Breast epithelium (tissue), 4 donors: ENCODE measurements at regions of chr4 and their contacts with region 1.

Region 1: DNA sequence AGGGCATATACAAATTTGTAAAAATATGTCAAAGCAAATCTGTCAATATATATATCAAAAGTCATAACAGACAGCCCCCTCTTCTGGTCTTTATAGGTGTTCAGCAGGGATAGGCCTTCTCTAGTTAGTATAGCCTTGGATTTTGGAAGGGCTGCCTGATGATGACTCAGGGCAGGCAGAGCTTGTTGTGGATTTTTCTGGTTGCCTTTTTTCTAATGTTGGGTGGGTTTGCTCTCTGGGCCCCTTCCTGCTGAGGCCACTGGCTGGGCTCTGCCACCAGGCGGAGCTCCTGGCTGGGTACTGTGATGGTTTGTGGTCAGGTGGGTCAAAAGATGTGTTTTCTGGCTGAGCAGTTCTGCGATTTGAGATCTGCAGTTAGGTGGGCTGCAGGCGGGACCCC is 294.2 kb downstream of the GRIA2 start:
- DNase-seq: no peak
- H3K4me3 ChIP-seq: no peak overlapping the region
- H3K27ac ChIP-seq: no peak overlapping the region
- H3K4me1 ChIP-seq: no peaks in the 10 kb centered on the region
- H3K27me3 ChIP-seq: no peaks in the 10 kb centered on the region
- CTCF ChIP-seq: no peak
- POLR2A ChIP-seq: no peak

Region 2: DNA sequence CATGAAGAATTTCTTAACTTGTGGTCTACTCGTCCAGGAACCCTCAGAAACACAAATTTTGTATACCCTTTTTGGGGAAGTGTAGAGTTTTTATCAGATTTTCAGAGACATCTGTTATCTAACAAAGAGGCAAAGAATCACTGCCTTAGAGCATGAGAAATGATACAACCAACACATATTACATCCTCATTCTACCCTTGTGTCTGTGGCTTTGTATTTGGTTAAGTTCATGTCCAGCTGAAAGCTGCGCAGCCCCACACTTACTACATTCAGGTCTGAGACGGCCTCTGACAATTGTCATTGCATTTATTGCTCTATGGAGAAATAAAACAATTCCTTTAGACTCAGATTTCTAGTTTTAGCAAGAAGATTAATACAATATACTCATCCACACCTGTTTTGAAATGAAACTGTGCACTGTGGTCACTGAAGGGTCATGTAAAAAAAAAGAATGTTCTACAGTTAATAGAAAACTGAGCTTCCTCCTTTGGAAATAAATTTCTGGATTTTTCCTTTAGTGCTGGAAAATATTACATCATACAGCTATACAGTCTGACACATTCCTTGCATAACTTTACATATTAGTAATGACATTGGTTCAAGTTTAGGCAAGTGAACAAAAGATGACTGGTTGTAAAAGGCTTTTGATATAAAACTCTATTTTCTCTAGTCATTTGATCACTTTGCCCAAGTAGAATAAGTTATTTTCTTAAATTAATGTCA is 398.9 kb before region 1 on chr4:
- intact Hi-C with region 1: no loop called
- DNase-seq: no peak
- H3K4me3 ChIP-seq: no peak overlapping the region
- H3K27ac ChIP-seq: no peak overlapping the region
- H3K4me1 ChIP-seq: no peaks in the 10 kb centered on the region
- H3K27me3 ChIP-seq: no peaks in the 10 kb centered on the region
- CTCF ChIP-seq: no peak
- POLR2A ChIP-seq: no peak

Region 3: GRCh38 chr4:157558016-157558415 is 43.3 kb after region 1 on chr4:
- intact Hi-C with region 1: loop called (anchors 5 kb)
- DNase-seq: no peak
- H3K4me3 ChIP-seq: no peak overlapping the region
- H3K27ac ChIP-seq: no peak overlapping the region
- H3K4me1 ChIP-seq: no peaks in the 10 kb centered on the region
- H3K27me3 ChIP-seq: no peaks in the 10 kb centered on the region
- CTCF ChIP-seq: no peak
- POLR2A ChIP-seq: no peak